ENCODE measurements at regions of chr20 and their contacts with region 1.

Region 1: DNA sequence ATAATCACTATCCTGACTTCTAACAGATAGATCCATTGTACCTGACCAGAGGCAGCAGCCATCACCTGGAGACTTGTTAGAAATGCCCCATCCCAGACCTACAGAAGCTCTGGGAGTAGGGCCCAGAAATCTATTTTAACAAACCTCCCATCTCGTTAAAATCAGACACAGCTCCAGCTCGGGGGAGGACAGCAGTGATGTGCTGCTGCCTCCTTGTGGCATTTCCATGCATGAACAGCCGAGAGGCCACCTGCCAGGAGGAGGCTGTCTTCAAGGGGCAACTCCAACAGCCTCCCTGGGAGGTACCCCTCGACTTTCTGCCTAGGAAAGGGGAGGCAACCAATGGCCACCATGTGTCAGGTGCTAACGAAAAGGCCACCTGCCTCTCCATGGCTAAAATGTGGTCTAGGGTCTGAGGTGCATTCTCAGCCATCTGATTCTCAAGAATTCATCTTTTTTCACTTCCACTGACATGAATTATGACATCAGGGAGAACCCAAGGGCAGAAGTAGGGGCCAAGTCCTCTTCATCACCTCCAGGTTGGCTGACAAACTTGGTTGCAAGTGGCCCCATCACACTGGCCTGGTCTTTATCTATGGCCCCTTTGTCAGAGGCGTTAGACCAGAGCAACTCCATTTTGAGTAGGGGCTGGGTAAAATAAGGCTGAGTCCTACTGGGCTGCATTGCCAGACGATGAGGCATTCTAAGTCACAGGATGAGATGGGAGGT is 12.2 kb upstream of the KCNK15 start:
- DNase-seq: peak; percentile 55 to 79 (median 72)
- H3K4me3 ChIP-seq: no peak overlapping the region
- H3K27ac ChIP-seq: no peak overlapping the region
- H3K4me1 ChIP-seq: peaks cover 0 to 3% (median 0%) of the 10 kb centered on the region in 3 donors
- H3K27me3 ChIP-seq: no peaks in the 10 kb centered on the region
- CTCF ChIP-seq: peak; percentile 78

Region 2: DNA sequence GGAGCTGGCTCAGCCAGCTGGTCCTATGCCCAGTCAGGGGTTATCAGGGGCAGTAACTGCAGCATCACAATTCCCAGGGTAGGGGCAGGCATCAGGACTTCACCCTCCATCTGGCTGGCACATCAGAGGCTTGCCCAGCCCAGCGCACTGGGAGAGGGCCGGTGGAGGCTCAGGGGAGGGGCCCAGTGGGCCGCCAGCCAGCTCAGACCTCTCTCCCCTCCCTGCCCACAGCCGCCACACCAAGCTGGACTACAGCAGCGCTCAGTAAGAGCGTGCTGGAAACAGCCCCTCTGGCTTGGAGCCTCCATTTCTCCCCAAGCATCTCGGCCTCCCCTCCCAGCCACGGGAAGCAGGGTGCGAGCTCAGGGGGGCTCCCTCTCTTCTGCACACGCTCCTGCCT is 104.0 kb before region 1 on chr20:
- intact Hi-C with region 1: no loop called
- DNase-seq: no peak
- H3K4me3 ChIP-seq: no peak overlapping the region
- H3K27ac ChIP-seq: no peak overlapping the region
- H3K4me1 ChIP-seq: no peaks in the 10 kb centered on the region
- H3K27me3 ChIP-seq: no peaks in the 10 kb centered on the region
- CTCF ChIP-seq: no peak

Region 3: DNA sequence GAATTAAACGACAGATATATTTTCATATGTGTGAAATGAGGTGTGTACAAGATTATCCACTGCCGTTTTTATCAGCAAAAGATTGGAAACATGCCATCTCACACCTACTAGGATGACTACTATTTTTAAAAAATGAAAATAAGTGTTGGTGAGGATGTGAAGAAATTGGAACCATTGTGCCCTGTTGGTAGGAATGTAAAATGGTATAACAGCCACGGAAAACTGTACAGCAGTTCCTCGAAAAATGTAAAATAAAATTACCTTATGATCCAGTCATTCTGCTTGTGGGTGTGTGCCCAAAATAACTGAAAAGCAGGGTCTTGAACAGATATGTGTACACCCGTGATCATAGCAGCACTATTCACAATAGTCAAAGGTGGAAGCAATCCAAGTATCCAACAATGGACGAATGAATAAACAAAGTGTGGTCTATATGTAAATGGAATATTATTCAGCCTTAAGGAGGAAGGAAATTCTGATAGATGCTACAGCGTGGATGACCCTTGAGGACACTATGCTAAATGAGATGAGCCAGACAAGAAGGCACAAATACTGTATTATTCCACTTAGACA is 45.4 kb before region 1 on chr20:
- intact Hi-C with region 1: loop called (anchors 5 kb)
- DNase-seq: no peak
- H3K4me3 ChIP-seq: no peak overlapping the region
- H3K27ac ChIP-seq: no peak overlapping the region
- H3K4me1 ChIP-seq: peaks cover 0 to 7% (median 0%) of the 10 kb centered on the region in 3 donors
- H3K27me3 ChIP-seq: no peaks in the 10 kb centered on the region
- CTCF ChIP-seq: no peak

Measured in kidney (tissue), 22 donors.